Sigmoid colon (tissue), 7 donors: ENCODE measurements at regions of chr5 and their contacts with region 1.

Region 1: DNA sequence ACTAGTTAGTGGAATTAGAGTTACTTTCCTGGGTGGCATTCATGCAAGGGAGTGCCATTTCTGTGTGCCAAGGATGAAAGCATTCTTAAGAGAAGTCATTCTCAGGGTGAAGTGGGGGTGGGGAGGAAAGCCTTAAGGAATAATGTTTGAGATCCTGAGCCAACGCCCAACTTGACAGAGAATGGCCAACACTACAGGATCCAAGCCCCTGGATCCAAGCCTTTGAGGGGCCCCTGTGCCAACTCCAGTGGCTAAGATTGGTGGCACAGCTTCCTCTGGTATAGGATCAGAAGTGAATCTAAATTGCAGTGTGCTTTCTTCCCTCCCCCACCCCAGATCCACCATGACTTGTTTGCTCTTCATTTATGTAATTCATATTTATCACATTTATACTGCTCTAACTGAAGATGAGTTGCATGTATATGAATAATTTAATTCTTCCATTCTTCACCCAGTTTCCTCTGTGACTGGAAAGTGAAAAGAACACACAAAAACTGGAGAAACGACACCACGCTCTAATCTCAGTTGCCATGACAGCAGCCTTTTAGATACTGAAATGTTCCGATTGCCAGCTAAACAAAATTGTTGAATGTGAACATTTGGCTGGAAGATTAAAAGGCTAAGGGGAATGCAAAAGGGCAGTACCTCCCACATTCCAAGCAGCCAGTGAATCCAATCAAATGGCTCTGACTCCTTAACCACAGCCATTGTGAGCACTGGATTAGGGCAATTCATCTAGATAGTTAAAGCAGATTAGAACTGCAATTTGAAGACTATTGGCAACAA is 4.5 kb downstream of the ZNF608 start:
- DNase-seq: no peak
- H3K4me3 ChIP-seq: peak overlapping the region in 3 of 4 donors; percentile 67 to 70 (median 69)
- H3K27ac ChIP-seq: peak overlapping the region; percentile 92 to 93 (median 93)
- H3K4me1 ChIP-seq: peaks cover 0 to 79% (median 60%) of the 10 kb centered on the region in 4 donors
- H3K27me3 ChIP-seq: no peaks in the 10 kb centered on the region
- CTCF ChIP-seq: no peak
- EP300 ChIP-seq: no peak
- POLR2A ChIP-seq: no peak

Region 2: DNA sequence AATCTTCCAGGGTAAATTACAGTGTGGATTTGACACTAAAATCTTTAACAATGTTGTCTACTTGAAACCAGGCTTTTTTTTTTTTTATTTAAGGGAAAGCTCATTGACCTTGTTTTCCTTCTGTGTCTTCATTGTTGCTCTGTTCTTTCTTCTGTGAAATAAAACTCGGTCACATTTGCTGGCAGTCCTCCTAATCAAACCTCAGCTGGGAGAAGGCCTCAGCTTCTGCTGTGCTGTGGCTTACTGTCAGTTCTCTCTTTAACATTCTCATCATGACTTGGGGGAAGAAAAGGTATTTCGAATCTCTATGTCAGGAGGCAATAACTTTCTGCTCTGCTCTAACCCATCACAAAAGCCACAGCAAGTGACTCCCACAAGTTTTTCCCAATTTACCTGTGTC is 264.3 kb before region 1 on chr5:
- intact Hi-C with region 1: loop called (anchors 5 kb)
- DNase-seq: no peak
- H3K4me3 ChIP-seq: no peak overlapping the region
- H3K27ac ChIP-seq: peak overlapping the region in 2 of 4 donors; percentile 22 to 58
- H3K4me1 ChIP-seq: peaks cover 0 to 16% (median 11%) of the 10 kb centered on the region in 4 donors
- H3K27me3 ChIP-seq: no peaks in the 10 kb centered on the region
- CTCF ChIP-seq: no peak
- EP300 ChIP-seq: no peak
- POLR2A ChIP-seq: no peak

Region 3: DNA sequence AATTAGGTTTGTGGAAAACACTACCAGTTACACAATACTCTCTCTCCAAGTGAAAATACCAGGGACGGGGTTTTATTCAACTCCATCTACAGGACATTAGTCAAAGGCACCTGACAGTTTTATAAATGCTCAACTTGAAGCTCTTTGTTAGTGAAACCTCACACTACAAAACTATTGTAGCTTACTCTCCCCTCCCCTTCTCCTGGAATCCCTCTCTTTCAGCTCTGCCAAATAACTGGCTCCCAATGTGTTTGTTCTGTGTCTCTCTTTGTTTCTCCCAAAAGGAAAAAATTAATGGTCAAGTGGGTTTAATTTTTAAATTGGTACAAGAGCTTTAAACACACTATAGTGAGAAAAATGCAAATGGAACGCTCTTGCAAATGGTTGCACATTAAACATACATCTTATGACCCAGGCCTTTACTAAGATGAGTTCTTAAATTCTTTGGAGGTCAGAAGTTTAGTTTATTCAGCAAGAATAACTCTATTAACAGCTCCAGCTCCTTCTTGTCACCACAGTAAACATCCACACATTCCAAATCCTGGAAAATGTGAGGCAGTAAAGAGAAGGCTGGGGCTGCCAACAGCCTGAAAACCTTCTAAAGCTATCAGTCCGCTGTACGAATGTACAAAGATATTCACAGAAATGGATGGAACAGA is 43.8 kb before region 1 on chr5:
- intact Hi-C with region 1: loop called (anchors 5 kb)
- DNase-seq: no peak
- H3K4me3 ChIP-seq: peak overlapping the region in 2 of 4 donors; percentile 4 to 22
- H3K27ac ChIP-seq: peak overlapping the region; percentile 71 to 89 (median 86)
- H3K4me1 ChIP-seq: peaks cover 0 to 72% (median 55%) of the 10 kb centered on the region in 4 donors
- H3K27me3 ChIP-seq: no peaks in the 10 kb centered on the region
- CTCF ChIP-seq: no peak
- EP300 ChIP-seq: peak in 2 of 4 donors; percentile 1 to 41
- POLR2A ChIP-seq: no peak